ENCODE measurements at regions of chr1 and their contacts with region 1.

Region 1: GRCh38 chr1:77143529-77144121 is 75.6 kb downstream of the PIGK start:
- DNase-seq: no peak
- ATAC-seq: no peak
- H3K4me3 ChIP-seq: no peak overlapping the region
- H3K27ac ChIP-seq: no peak overlapping the region
- H3K4me1 ChIP-seq: no peaks in the 10 kb centered on the region
- H3K27me3 ChIP-seq: no peaks in the 10 kb centered on the region
- CTCF ChIP-seq: peak; percentile 10; the same call in 1 of the 2 replicates
- EP300 ChIP-seq: no peak
- POLR2A ChIP-seq: no peak
- RAD21 ChIP-seq: no peak

Region 2: GRCh38 chr1:75908717-75909152 is 1234.9 kb before region 1 on chr1:
- CTCF ChIA-PET with region 1: no interaction called
- POLR2A ChIA-PET with region 1: no interaction called
- in situ Hi-C with region 1: no loop called
- intact Hi-C with region 1: loop called (anchors 5 kb)
- DNase-seq: peak; percentile 31
- ATAC-seq: peak; percentile 93
- H3K4me3 ChIP-seq: no peak overlapping the region
- H3K27ac ChIP-seq: no peak overlapping the region
- H3K4me1 ChIP-seq: no peaks in the 10 kb centered on the region
- H3K27me3 ChIP-seq: no peaks in the 10 kb centered on the region; a peak in 1 of 5 replicates
- CTCF ChIP-seq: peak; percentile 70
- EP300 ChIP-seq: no peak
- POLR2A ChIP-seq: no peak
- RAD21 ChIP-seq: no peak

Region 3: GRCh38 chr1:76330991-76331603 is 812.5 kb before region 1 on chr1:
- CTCF ChIA-PET with region 1: no interaction called
- POLR2A ChIA-PET with region 1: no interaction called
- in situ Hi-C with region 1: loop called (anchors 25 kb)
- intact Hi-C with region 1: loop called (anchors 1 kb)
- DNase-seq: peak; percentile 18
- ATAC-seq: peak; percentile 82
- H3K4me3 ChIP-seq: no peak overlapping the region
- H3K27ac ChIP-seq: no peak overlapping the region
- H3K4me1 ChIP-seq: no peaks in the 10 kb centered on the region
- H3K27me3 ChIP-seq: no peaks in the 10 kb centered on the region; a peak in 1 of 5 replicates
- CTCF ChIP-seq: peak; percentile 73
- EP300 ChIP-seq: no peak
- POLR2A ChIP-seq: no peak
- RAD21 ChIP-seq: no peak

Region 4: DNA sequence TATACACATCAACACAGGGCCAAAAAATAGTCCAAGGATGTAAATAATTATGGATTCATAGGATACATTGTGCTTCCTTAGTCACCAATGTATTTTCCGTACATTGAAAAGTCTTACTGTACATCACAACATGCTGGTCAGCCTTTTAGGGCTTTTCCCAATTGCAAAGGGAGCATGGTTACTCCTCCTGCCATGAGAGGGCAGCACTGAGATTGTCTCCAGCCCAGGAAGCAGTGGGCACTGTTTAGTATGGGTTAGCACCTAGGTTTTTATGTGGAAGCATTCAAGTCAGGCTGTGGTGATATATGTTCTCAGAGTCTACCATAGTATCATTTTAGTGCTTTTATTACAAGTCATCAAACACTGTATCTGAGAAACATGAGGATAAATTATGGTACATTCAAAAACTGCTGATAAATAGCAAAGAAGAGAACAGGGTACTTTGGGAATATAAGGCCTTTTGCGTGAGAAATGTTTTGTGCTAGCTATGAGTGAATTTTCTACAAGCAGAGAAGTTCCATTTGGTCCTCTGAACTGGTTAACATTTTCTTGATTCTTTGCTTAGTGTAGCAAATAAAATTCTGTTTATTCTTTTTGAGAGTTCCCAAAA is 242.4 kb before region 1 on chr1:
- CTCF ChIA-PET with region 1: interaction called, 8 read pairs
- POLR2A ChIA-PET with region 1: no interaction called
- in situ Hi-C with region 1: no loop called
- intact Hi-C with region 1: loop called (anchors 1 kb)
- DNase-seq: peak; percentile 46
- ATAC-seq: peak; percentile 93
- H3K4me3 ChIP-seq: no peak overlapping the region
- H3K27ac ChIP-seq: no peak overlapping the region
- H3K4me1 ChIP-seq: no peaks in the 10 kb centered on the region
- H3K27me3 ChIP-seq: no peaks in the 10 kb centered on the region; a peak in 1 of 5 replicates
- CTCF ChIP-seq: peak; percentile 76
- EP300 ChIP-seq: no peak
- POLR2A ChIP-seq: no peak
- RAD21 ChIP-seq: 0 out of 2 replicates have a peak, but pooled peaks have one; percentile 18

Region 5: GRCh38 chr1:77313491-77313890 is 169.9 kb after region 1 on chr1:
- CTCF ChIA-PET with region 1: interaction called, 8 read pairs
- POLR2A ChIA-PET with region 1: no interaction called
- in situ Hi-C with region 1: no loop called
- intact Hi-C with region 1: loop called (anchors 1 kb)
- DNase-seq: peak; percentile 40
- ATAC-seq: peak; percentile 100
- H3K4me3 ChIP-seq: no peak overlapping the region
- H3K27ac ChIP-seq: no peak overlapping the region
- H3K4me1 ChIP-seq: no peaks in the 10 kb centered on the region
- H3K27me3 ChIP-seq: no peaks in the 10 kb centered on the region; a peak in 2 of 5 replicates
- CTCF ChIP-seq: peak; percentile 54
- EP300 ChIP-seq: no peak
- POLR2A ChIP-seq: no peak
- RAD21 ChIP-seq: no peak

Region 6: DNA sequence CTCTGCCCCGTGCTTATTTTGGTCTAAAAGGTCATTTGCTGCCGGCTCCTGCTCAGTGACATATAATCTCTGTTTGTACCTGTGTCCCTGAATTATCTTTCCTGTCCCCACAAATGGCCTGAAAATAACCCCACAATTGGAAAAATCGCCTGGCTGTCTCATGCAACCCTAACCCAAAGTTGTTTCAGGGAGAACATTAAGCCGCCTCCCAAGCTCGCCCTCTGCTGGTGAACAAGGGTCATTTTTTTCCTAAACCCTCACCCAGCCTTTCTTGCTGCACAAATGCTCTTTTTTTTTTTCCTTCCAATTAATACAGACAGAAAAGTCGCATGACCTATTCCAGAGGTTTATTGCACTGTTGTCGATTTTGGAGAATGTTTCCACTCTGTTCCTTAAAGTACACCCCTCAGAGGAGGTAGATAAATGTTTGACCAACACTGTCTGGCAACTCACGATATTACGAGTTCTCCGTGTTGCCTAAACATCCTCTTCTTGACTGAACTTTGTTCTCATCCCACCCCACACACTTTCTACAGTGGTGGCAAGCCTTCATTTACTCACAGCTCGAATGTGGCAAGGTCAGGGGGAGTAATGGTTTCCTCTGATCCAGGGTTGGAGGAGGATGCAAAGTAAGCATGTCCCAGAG is 390.2 kb after region 1 on chr1:
- CTCF ChIA-PET with region 1: interaction called, 9 read pairs
- POLR2A ChIA-PET with region 1: no interaction called
- in situ Hi-C with region 1: no loop called
- intact Hi-C with region 1: loop called (anchors 2 kb)
- DNase-seq: peak; percentile 40
- ATAC-seq: peak; percentile 79
- H3K4me3 ChIP-seq: peak overlapping the region in 1 of 3 experiments; percentile 17; a peak in 1 of 6 replicates
- H3K27ac ChIP-seq: no peak overlapping the region
- H3K4me1 ChIP-seq: peaks cover 20% of the 10 kb centered on the region
- H3K27me3 ChIP-seq: no peaks in the 10 kb centered on the region; a peak in 1 of 5 replicates
- CTCF ChIP-seq: peak; percentile 80
- EP300 ChIP-seq: no peak
- POLR2A ChIP-seq: no peak
- RAD21 ChIP-seq: 0 out of 2 replicates have a peak, but pooled peaks have one; percentile 16

Measured in HepG2 (cell line).